B cell (primary cell): ENCODE measurements at regions of chr5 and their contacts with region 1.

Region 1: GRCh38 chr5:96752341-96753016 is 55.3 kb downstream of the ERAP1 start:
- DNase-seq: peak; percentile 72
- ATAC-seq: no peak
- H3K4me3 ChIP-seq: no peak overlapping the region
- H3K4me3 Mint-ChIP-seq: no peak overlapping the region
- H3K27ac ChIP-seq: no peak overlapping the region
- H3K27ac Mint-ChIP-seq: no peak overlapping the region
- H3K4me1 ChIP-seq: no peaks in the 10 kb centered on the region
- H3K4me1 Mint-ChIP-seq: no peaks in the 10 kb centered on the region
- H3K27me3 ChIP-seq: no peaks in the 10 kb centered on the region
- H3K27me3 Mint-ChIP-seq: no peaks in the 10 kb centered on the region
- CTCF ChIP-seq: peak; percentile 85

Region 2: GRCh38 chr5:95655575-95655974 is 1096.9 kb before region 1 on chr5:
- CTCF ChIA-PET with region 1: no interaction called
- POLR2A ChIA-PET with region 1: no interaction called
- intact Hi-C with region 1: no loop called
- DNase-seq: no peak
- ATAC-seq: no peak
- H3K4me3 ChIP-seq: no peak overlapping the region
- H3K4me3 Mint-ChIP-seq: no peak overlapping the region
- H3K27ac ChIP-seq: no peak overlapping the region
- H3K27ac Mint-ChIP-seq: no peak overlapping the region
- H3K4me1 ChIP-seq: no peaks in the 10 kb centered on the region
- H3K4me1 Mint-ChIP-seq: no peaks in the 10 kb centered on the region
- H3K27me3 ChIP-seq: no peaks in the 10 kb centered on the region
- H3K27me3 Mint-ChIP-seq: no peaks in the 10 kb centered on the region
- CTCF ChIP-seq: no peak

Region 3: GRCh38 chr5:95730730-95731570 is 1021.5 kb before region 1 on chr5 and contains the start of gene RHOBTB3:
- CTCF ChIA-PET with region 1: no interaction called
- POLR2A ChIA-PET with region 1: no interaction called
- intact Hi-C with region 1: no loop called
- DNase-seq: peak; percentile 61
- ATAC-seq: peak; percentile 70
- H3K4me3 ChIP-seq: peak within 1 kb of the TSS; percentile 51 to 75 (median 60)
- H3K4me3 Mint-ChIP-seq: peak within 1 kb of the TSS; percentile 90
- H3K27ac ChIP-seq: no peak within 1 kb of the TSS
- H3K27ac Mint-ChIP-seq: peak within 1 kb of the TSS; percentile 78
- H3K4me1 ChIP-seq: peaks cover 8 to 13% of the 10 kb centered on the region in 2 donors
- H3K4me1 Mint-ChIP-seq: peaks cover 29% of the 10 kb centered on the region
- H3K27me3 ChIP-seq: peaks cover 0 to 10% (median 6%) of the 10 kb centered on the region in 4 experiments
- H3K27me3 Mint-ChIP-seq: peaks cover 12% of the 10 kb centered on the region
- CTCF ChIP-seq: no peak
- total RNA-seq, gene RHOBTB3: 5.0 and 5.3 TPM in 2 replicates

Region 4: DNA sequence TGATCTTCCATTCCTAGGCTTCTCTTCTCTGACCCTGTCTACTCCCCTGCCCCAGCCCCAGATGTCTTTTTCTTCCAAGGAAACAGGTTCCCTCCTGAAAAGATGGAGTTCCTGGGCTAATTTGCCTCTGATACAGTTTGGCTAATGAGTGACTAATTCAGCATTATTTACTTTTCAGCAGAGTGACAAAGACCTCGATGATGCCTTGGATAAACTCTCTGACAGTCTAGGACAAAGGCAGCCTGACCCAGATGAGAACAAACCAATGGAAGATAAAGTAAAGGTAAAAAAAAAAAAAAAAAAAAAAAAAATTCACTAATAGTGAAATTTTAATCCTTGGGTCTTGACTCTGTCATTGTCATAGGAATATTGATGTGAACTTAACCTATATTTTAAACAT is 12.6 kb after region 1 on chr5:
- CTCF ChIA-PET with region 1: interaction called, 15 read pairs
- POLR2A ChIA-PET with region 1: no interaction called
- intact Hi-C with region 1: no loop called
- DNase-seq: no peak
- ATAC-seq: no peak
- H3K4me3 ChIP-seq: no peak overlapping the region
- H3K4me3 Mint-ChIP-seq: no peak overlapping the region
- H3K27ac ChIP-seq: no peak overlapping the region
- H3K27ac Mint-ChIP-seq: peak overlapping the region; percentile 29
- H3K4me1 ChIP-seq: no peaks in the 10 kb centered on the region
- H3K4me1 Mint-ChIP-seq: no peaks in the 10 kb centered on the region
- H3K27me3 ChIP-seq: no peaks in the 10 kb centered on the region
- H3K27me3 Mint-ChIP-seq: no peaks in the 10 kb centered on the region
- CTCF ChIP-seq: no peak

Region 5: GRCh38 chr5:96823900-96824351 is 71.4 kb after region 1 on chr5:
- CTCF ChIA-PET with region 1: interaction called, 4 read pairs
- POLR2A ChIA-PET with region 1: no interaction called
- intact Hi-C with region 1: loop called (anchors 5 kb)
- DNase-seq: no peak
- ATAC-seq: no peak
- H3K4me3 ChIP-seq: no peak overlapping the region
- H3K4me3 Mint-ChIP-seq: no peak overlapping the region
- H3K27ac ChIP-seq: no peak overlapping the region
- H3K27ac Mint-ChIP-seq: no peak overlapping the region
- H3K4me1 ChIP-seq: no peaks in the 10 kb centered on the region
- H3K4me1 Mint-ChIP-seq: no peaks in the 10 kb centered on the region
- H3K27me3 ChIP-seq: peaks cover 0 to 6% (median 0%) of the 10 kb centered on the region in 4 experiments
- H3K27me3 Mint-ChIP-seq: peaks cover 3% of the 10 kb centered on the region
- CTCF ChIP-seq: no peak

Region 6: DNA sequence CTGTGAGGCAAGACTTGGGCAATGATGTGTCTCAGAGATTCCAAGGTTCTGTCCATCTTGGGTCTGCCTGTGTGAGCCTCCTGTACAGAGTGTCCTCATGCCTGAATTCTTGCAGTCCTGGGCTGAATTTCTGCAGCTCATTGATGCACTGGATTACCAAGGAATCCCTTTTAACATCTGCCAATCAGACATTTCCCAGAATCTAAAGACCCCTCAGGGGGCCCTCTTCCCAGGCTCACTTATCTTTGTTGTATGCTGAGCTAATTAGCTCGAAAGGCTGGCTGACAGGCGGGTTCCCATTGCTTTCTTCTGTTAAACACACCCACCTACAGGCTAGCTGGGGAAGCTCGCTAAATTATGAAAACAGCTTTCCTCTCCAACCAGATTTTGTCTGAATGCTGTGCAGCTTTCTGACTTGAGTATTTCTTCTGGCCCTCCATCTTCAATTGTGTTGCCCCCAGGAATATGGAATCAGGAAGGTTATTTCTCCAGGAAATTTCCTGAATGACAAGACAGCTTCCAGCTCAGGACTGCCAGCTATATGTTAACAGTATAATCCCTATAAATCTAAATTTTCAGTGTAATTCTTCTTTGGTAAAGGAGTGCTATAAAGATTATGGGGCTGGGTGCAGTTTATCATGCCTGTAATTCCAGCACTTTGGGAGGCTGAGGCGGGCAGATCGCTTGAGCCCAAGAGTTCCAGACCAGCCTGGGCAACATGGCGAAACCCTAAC is 390.2 kb after region 1 on chr5 and contains the start of gene LIX1:
- CTCF ChIA-PET with region 1: interaction called, 18 read pairs
- POLR2A ChIA-PET with region 1: no interaction called
- intact Hi-C with region 1: no loop called
- DNase-seq: peak; percentile 34
- ATAC-seq: no peak
- H3K4me3 ChIP-seq: no peak within 1 kb of the TSS
- H3K4me3 Mint-ChIP-seq: no peak within 1 kb of the TSS
- H3K27ac ChIP-seq: no peak within 1 kb of the TSS
- H3K27ac Mint-ChIP-seq: no peak within 1 kb of the TSS
- H3K4me1 ChIP-seq: no peaks in the 10 kb centered on the region
- H3K4me1 Mint-ChIP-seq: no peaks in the 10 kb centered on the region
- H3K27me3 ChIP-seq: no peaks in the 10 kb centered on the region
- H3K27me3 Mint-ChIP-seq: no peaks in the 10 kb centered on the region
- CTCF ChIP-seq: peak; percentile 35
- total RNA-seq, gene LIX1: not detected in 2 replicates